ENCODE measurements at regions of chr7 and their contacts with region 1.

Region 1: GRCh38 chr7:13908667-13909397 is 80.6 kb downstream of the ETV1 start:
- DNase-seq: no peak
- ATAC-seq: no peak

Region 2: DNA sequence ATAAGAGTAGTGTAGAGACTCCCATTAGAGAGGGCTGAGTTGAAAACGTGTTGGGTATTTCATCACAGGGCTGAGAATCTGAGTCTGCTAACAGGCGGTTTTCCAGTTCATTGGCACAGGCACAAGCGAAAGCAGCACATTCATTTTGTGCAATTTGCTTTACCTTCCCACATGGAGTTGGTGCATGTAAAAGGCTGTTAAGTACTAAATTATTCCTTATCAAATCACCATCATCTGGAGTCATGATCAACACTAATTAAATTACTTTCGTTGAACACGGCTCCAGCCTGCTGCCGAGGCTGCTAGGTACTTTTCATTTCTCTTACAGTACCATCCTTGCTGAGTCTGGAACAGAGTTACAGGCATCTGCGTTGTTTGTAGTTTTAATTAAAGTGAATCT is 36.8 kb after region 1 on chr7:
- intact Hi-C with region 1: no loop called
- DNase-seq: no peak
- ATAC-seq: peak; percentile 92

Region 3: DNA sequence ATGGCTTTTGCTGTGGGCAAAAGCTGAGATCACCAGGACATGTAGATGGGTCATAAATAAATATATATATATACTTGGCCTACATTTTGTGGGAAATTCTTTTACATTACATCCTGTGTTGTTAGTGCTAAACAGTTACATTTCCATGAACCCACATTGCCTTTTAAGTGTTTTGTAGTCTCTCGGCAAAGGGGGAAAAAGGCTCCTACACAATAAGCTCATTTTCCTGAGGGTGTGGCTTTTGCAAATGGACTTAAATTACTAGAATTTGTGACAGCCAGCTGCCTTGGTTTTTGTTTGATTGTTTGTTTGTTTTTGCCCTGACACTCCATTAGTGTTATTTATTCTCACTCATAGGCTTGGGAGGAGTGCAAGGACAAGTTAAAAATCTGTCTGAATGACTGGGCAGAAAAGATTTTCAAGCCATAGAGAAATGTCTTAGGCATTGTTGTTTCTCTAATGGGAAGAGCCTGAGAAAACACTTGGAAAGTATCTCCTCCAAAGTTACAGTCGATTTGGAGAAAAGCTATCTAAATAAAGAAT is 865.0 kb after region 1 on chr7:
- intact Hi-C with region 1: loop called (anchors 5 kb)
- DNase-seq: no peak
- ATAC-seq: no peak